ENCODE measurements at regions of chr3 and their contacts with region 1.

Region 1: DNA sequence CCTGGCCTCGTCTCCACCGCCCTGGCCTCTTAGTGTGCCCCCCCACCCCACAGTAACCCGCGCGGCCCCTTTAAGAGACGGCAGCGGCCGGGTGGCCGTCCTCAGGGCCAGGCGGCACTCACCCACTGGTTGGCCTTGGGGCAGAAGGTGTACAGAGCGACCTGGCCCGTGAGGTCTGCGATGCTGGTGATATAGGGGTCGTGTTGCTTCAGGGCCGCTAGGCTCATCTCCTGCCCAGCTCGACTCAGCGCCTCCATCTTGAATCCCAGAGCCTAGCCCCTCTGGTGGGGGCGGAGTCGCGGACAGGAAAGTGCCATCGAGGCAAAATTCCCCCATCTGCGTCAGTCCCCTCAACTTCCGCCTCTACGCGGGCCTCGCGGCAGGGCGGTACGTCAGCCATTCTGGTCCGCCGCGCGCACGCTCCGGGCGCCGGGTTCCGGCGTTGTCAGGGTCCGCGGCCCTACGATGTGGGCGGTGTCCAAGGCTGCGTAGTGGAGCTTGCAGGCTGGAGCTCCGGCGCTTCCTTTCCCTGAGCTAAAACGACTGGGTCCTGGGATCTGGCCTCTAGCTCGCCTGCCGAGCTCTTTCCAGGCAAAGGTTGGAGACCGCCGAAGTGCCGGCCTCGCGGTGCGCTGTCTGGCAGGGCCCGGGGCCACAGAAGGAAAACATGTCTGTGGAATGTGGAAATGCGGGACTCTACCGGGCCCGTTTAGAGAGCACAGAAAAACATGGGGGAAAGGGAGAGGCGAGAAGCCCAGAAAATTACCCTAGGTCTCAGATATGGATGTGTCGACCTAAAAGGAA is at the start of gene DCP1A:
- DNase-seq: peak; percentile 96 to 97
- H3K4me3 ChIP-seq: peak within 1 kb of the TSS; percentile 87 to 97 (median 96)
- H3K27ac ChIP-seq: peak within 1 kb of the TSS; percentile 84 to 93 (median 92)
- H3K4me1 ChIP-seq: peaks cover 17 to 19% of the 10 kb centered on the region in 2 donors
- H3K27me3 ChIP-seq: no peaks in the 10 kb centered on the region
- CTCF ChIP-seq: peak in 1 of 6 experiments; percentile 22
- POLR2A ChIP-seq: peak; percentile 27 to 91
- total RNA-seq, gene DCP1A: 20.9 to 30.6 (median 23.3) TPM

Region 2: DNA sequence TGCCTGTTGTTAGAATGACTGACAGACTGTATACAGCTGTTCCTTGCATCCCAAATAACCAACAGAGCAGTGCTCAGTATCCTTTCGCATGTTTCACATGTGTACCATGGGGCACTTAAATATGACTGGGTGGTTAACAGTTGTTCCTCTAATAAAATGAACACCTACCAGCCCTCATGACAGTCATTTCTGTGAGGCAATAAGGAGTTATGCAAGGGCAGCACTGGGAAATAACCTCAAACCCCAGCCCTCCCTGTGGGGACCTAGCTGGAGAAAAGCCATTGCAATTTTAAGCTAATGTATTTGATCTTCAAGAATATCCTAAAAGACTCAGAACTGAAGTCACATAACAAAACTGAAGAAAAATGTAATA is 224.5 kb before region 1 on chr3:
- intact Hi-C with region 1: loop called (anchors 10 kb)
- DNase-seq: no peak
- H3K4me3 ChIP-seq: no peak overlapping the region
- H3K27ac ChIP-seq: no peak overlapping the region
- H3K4me1 ChIP-seq: no peaks in the 10 kb centered on the region
- H3K27me3 ChIP-seq: no peaks in the 10 kb centered on the region
- CTCF ChIP-seq: no peak
- POLR2A ChIP-seq: no peak

Measured in thyroid gland (tissue), 4 donors.